Activated B cell treated with CpG ODN at 0.5 μM for 24 hours (primary cell): ENCODE measurements at regions of chr20 and their contacts with region 1.

Region 1: GRCh38 chr20:41617931-41618806 is at the start of gene CHD6:
- DNase-seq: peak; percentile 97
- ATAC-seq: peak; percentile 96
- H3K4me3 Mint-ChIP-seq: peak within 1 kb of the TSS; percentile 94
- H3K27ac Mint-ChIP-seq: peak within 1 kb of the TSS; percentile 85
- H3K4me1 Mint-ChIP-seq: peaks cover 49% of the 10 kb centered on the region
- H3K27me3 Mint-ChIP-seq: no peaks in the 10 kb centered on the region
- CTCF ChIP-seq: no peak
- total RNA-seq, gene CHD6: 54.5 and 59.9 TPM in 2 replicates

Region 2: GRCh38 chr20:41047975-41048305 is 570.2 kb before region 1 on chr20:
- CTCF ChIA-PET with region 1: no interaction called
- POLR2A ChIA-PET with region 1: no interaction called
- intact Hi-C with region 1: loop called (anchors 10 kb)
- DNase-seq: no peak
- ATAC-seq: peak; percentile 76
- H3K4me3 Mint-ChIP-seq: peak overlapping the region; percentile 73
- H3K27ac Mint-ChIP-seq: peak overlapping the region; percentile 80
- H3K4me1 Mint-ChIP-seq: peaks cover 85% of the 10 kb centered on the region
- H3K27me3 Mint-ChIP-seq: no peaks in the 10 kb centered on the region
- CTCF ChIP-seq: no peak

Region 3: GRCh38 chr20:41317536-41318270 is 300.5 kb before region 1 on chr20 and contains the start of gene ZHX3:
- CTCF ChIA-PET with region 1: no interaction called
- POLR2A ChIA-PET with region 1: no interaction called
- intact Hi-C with region 1: loop called (anchors 1 kb)
- DNase-seq: peak; percentile 99
- ATAC-seq: peak; percentile 97
- H3K4me3 Mint-ChIP-seq: peak within 1 kb of the TSS; percentile 91
- H3K27ac Mint-ChIP-seq: peak within 1 kb of the TSS; percentile 87
- H3K4me1 Mint-ChIP-seq: peaks cover 23% of the 10 kb centered on the region
- H3K27me3 Mint-ChIP-seq: no peaks in the 10 kb centered on the region
- CTCF ChIP-seq: no peak
- total RNA-seq, gene ZHX3: 19.5 and 21.2 TPM in 2 replicates

Region 4: GRCh38 chr20:41560970-41561369 is 57.2 kb before region 1 on chr20:
- CTCF ChIA-PET with region 1: no interaction called
- POLR2A ChIA-PET with region 1: no interaction called
- intact Hi-C with region 1: loop called (anchors 10 kb)
- DNase-seq: no peak
- ATAC-seq: no peak
- H3K4me3 Mint-ChIP-seq: no peak overlapping the region
- H3K27ac Mint-ChIP-seq: no peak overlapping the region
- H3K4me1 Mint-ChIP-seq: peaks cover 69% of the 10 kb centered on the region
- H3K27me3 Mint-ChIP-seq: no peaks in the 10 kb centered on the region
- CTCF ChIP-seq: no peak

Region 5: GRCh38 chr20:41664350-41664983 is 46.3 kb after region 1 on chr20:
- CTCF ChIA-PET with region 1: no interaction called
- POLR2A ChIA-PET with region 1: interaction called, 5 read pairs
- intact Hi-C with region 1: loop called (anchors 5 kb)
- DNase-seq: no peak
- ATAC-seq: peak; percentile 85
- H3K4me3 Mint-ChIP-seq: peak overlapping the region; percentile 81
- H3K27ac Mint-ChIP-seq: peak overlapping the region; percentile 88
- H3K4me1 Mint-ChIP-seq: peaks cover 5% of the 10 kb centered on the region
- H3K27me3 Mint-ChIP-seq: peaks cover 20% of the 10 kb centered on the region
- CTCF ChIP-seq: no peak